Activated B cell treated with CpG ODN at 0.5 μM for 24 hours (primary cell): ENCODE measurements at regions of chr20 and their contacts with region 1.

Region 1: GRCh38 chr20:44885392-44886265 is at the start of gene YWHAB:
- DNase-seq: peak; percentile 96
- ATAC-seq: peak; percentile 98
- H3K4me3 Mint-ChIP-seq: peak within 1 kb of the TSS; percentile 94
- H3K27ac Mint-ChIP-seq: peak within 1 kb of the TSS; percentile 91
- H3K4me1 Mint-ChIP-seq: peaks cover 60% of the 10 kb centered on the region
- H3K27me3 Mint-ChIP-seq: no peaks in the 10 kb centered on the region
- CTCF ChIP-seq: no peak
- total RNA-seq, gene YWHAB: 234 and 246 TPM in 2 replicates

Region 2: GRCh38 chr20:44210422-44211176 is 675.0 kb before region 1 on chr20 and contains the start of gene OSER1:
- CTCF ChIA-PET with region 1: no interaction called
- POLR2A ChIA-PET with region 1: interaction called, 3 read pairs
- intact Hi-C with region 1: loop called (anchors 1 kb)
- DNase-seq: peak; percentile 99
- ATAC-seq: peak; percentile 80
- H3K4me3 Mint-ChIP-seq: peak within 1 kb of the TSS; percentile 98
- H3K27ac Mint-ChIP-seq: peak within 1 kb of the TSS; percentile 98
- H3K4me1 Mint-ChIP-seq: peaks cover 65% of the 10 kb centered on the region
- H3K27me3 Mint-ChIP-seq: no peaks in the 10 kb centered on the region
- CTCF ChIP-seq: no peak
- total RNA-seq, gene OSER1: 47.3 and 48.9 TPM in 2 replicates

Region 3: GRCh38 chr20:44582311-44583025 is 303.2 kb before region 1 on chr20 and contains the start of gene PKIG:
- CTCF ChIA-PET with region 1: no interaction called
- POLR2A ChIA-PET with region 1: interaction called, 3 read pairs
- intact Hi-C with region 1: loop called (anchors 5 kb)
- DNase-seq: no peak
- ATAC-seq: no peak
- H3K4me3 Mint-ChIP-seq: peak within 1 kb of the TSS; percentile 94
- H3K27ac Mint-ChIP-seq: peak within 1 kb of the TSS; percentile 96
- H3K4me1 Mint-ChIP-seq: peaks cover 79% of the 10 kb centered on the region
- H3K27me3 Mint-ChIP-seq: no peaks in the 10 kb centered on the region
- CTCF ChIP-seq: no peak
- total RNA-seq, gene PKIG: 181 and 191 TPM in 2 replicates

Region 4: DNA sequence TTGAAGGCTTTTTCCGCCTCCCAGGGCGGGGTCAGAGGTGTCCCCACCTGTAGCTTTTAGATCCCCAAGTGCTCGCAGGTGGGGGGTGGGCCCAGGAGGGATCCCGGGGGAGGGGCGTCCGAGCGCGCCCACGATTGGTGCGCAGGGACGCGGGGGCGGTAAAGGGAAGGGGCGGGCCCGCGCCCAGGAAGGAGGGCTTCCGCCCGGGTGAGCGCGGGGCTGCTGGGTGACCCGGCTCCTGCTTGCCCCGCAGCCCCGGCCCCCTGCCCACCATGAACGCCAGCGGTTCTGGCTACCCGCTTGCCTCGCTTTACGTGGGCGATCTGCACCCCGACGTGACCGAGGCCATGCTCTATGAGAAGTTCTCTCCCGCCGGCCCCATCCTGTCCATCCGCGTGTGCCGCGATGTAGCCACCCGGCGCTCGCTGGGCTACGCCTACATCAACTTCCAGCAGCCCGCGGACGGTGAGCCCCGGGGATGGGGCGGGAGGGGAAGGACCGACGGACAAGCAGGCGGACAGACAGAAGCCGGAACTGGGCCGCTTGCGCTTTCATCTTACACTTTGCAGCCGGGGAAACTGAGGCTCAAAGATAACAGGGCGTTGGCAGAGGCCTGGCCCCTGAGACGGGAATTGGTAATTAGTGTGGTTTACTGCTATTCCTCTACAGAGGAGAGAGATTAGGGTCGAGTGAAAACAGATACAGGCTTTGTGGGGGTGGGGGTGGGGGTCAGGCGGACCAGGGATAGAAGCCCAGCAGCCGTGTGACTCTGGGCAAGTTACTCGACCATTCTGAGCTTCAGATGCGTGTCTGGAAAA is 24.5 kb after region 1 on chr20 and contains the start of gene PABPC1L:
- CTCF ChIA-PET with region 1: interaction called, 3 read pairs
- POLR2A ChIA-PET with region 1: interaction called, 12 read pairs
- intact Hi-C with region 1: loop called (anchors 1 kb)
- DNase-seq: peak; percentile 72
- ATAC-seq: peak; percentile 98
- H3K4me3 Mint-ChIP-seq: peak within 1 kb of the TSS; percentile 89
- H3K27ac Mint-ChIP-seq: no peak within 1 kb of the TSS
- H3K4me1 Mint-ChIP-seq: peaks cover 18% of the 10 kb centered on the region
- H3K27me3 Mint-ChIP-seq: no peaks in the 10 kb centered on the region
- CTCF ChIP-seq: no peak
- total RNA-seq, gene PABPC1L: 49.5 and 61.1 TPM in 2 replicates

Region 5: DNA sequence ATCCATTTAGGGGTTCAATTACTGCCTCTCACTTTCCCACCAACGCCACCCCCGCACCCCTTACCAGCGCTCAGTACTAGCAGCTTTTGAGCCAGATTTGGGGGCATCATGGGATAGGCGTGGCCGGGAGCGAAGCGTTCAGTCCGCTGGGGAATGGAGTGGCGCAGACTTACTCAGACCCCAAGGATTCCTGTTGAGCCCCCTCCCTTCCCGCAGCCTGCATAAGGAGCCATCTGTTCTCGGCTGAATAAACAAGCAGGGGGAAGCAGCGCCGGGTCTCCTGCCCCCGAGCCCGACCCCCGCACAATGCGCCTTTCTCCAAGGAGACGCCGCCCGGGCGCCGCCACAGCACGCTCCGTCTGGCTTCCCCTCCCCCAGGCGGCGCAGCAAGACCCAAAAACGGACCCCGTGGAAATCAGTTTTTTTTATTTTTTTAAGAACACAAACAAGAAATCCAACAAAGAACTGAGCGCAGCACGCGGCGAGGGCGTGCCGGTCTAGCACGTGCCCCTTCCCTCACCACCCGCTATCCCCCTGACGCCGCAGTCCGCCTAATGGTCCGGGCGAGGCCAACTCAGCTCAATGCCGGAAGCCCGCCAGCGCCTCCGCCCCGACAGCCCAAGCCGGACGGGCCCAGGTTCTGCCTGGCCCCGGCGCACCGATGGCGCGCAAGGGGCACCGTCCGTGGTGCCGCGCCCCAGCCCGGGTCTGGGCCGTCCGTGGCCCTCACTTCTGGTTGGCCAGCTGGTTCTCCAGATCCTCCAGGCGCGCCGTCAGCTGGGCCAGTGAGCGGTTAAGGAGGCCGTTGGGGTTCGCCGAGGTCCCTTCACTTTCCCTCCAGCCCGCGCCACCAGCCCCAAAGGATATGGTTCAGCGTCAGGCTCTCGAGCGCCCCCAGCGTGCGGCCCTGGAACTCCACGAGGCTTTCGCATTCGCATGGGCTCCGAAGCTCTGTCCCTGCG is 407.7 kb after region 1 on chr20:
- CTCF ChIA-PET with region 1: interaction called, 3 read pairs
- POLR2A ChIA-PET with region 1: no interaction called
- intact Hi-C with region 1: loop called (anchors 10 kb)
- DNase-seq: peak; percentile 78
- ATAC-seq: peak; percentile 89
- H3K4me3 Mint-ChIP-seq: peak overlapping the region; percentile 80
- H3K27ac Mint-ChIP-seq: no peak overlapping the region
- H3K4me1 Mint-ChIP-seq: peaks cover 21% of the 10 kb centered on the region
- H3K27me3 Mint-ChIP-seq: peaks cover 27% of the 10 kb centered on the region
- CTCF ChIP-seq: peak; percentile 87